PC-9 (cell line): ENCODE measurements at regions of chr13 and their contacts with region 1.

Region 1: GRCh38 chr13:73058736-73059459 is at the start of gene KLF5:
- DNase-seq: peak; percentile 92 to 99
- H3K4me3 ChIP-seq: peak within 1 kb of the TSS; percentile 89
- H3K27ac ChIP-seq: peak within 1 kb of the TSS; percentile 96
- H3K4me1 ChIP-seq: peaks cover 62% of the 10 kb centered on the region
- H3K27me3 ChIP-seq: no peaks in the 10 kb centered on the region
- CTCF ChIP-seq: no peak
- total RNA-seq, gene KLF5: 54.3 and 65.9 TPM in 2 replicates

Region 2: DNA sequence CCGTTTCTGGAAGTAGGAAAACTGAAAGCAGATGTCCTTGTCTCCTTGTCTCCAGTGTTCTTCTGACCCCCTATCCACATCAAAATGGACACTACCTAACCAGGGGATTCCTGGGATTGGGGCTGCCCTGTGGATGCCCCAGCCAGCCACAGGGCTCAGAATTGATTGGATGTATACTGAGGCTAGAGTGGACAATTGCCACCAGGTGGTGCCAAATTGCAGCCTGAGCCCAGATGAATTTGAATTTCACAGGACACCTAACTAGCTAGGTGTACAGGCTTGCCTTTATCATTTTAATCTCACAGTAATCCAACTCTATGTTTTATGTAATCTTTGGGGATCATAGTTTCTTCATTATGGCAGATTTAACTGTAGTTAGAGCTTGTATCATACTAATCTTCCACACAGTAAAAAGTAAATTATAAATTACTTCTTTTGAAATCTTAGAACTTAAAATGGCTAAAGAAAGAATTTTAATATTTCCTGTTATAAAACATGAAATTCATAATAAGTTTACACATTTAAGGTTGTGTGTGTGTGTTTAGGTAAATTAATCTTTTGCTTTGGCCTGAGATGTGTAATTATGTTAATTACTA is 219.0 kb before region 1 on chr13:
- CTCF ChIA-PET with region 1: no interaction called
- POLR2A ChIA-PET with region 1: no interaction called
- intact Hi-C with region 1: loop called (anchors 1 kb)
- DNase-seq: peak; percentile 39 to 54
- H3K4me3 ChIP-seq: no peak overlapping the region
- H3K27ac ChIP-seq: no peak overlapping the region
- H3K4me1 ChIP-seq: no peaks in the 10 kb centered on the region
- H3K27me3 ChIP-seq: no peaks in the 10 kb centered on the region
- CTCF ChIP-seq: peak; percentile 81

Region 3: GRCh38 chr13:73096181-73097117 is 37.6 kb after region 1 on chr13:
- CTCF ChIA-PET with region 1: interaction called, 7 read pairs
- POLR2A ChIA-PET with region 1: no interaction called
- intact Hi-C with region 1: loop called (anchors 1 kb)
- DNase-seq: peak; percentile 91 to 92
- H3K4me3 ChIP-seq: no peak overlapping the region
- H3K27ac ChIP-seq: peak overlapping the region; percentile 85
- H3K4me1 ChIP-seq: peaks cover 30% of the 10 kb centered on the region
- H3K27me3 ChIP-seq: no peaks in the 10 kb centered on the region
- CTCF ChIP-seq: no peak

Region 4: DNA sequence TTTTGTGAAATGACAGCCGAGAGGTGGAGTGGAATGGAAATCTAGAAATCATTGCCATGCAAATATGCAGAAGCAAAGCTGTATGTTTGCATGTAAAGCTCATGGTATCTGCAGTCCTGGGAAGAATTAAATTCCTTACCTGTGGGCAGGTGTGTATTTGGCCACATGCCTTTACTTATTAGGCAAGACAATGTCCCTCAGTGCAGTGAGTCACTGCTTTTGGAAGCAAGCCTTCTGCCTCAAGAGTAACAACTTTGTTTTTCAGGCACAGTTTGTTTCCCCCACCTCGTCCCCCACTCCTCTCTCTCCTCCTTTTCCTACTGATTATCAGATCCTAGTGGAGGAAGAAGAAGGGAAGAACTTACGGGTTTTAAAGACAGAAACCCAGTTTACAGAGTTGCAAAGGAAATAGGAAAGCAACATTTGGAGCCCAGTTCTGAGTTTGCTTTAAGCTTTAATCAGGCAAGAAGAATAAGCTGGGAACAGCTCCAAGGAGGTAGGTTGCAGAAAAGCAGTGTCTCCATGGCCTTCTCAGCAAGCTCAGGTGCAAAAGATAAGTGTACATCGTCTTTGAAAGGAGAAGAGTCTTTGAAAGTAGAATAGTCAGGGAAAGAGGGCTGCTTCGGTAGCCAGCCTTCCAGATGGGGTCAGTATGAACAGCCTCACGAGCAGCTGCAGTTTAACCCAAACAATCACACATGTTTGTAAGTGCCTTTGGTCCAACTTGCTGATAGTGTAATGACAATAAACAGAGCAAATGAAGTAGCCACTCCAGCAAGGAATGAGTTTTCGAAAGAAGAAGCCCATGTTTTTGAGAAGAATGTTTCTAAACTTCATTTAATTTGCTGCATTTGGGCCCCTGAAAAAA is 190.0 kb after region 1 on chr13:
- CTCF ChIA-PET with region 1: no interaction called
- POLR2A ChIA-PET with region 1: no interaction called
- intact Hi-C with region 1: loop called (anchors 5 kb)
- DNase-seq: peak; percentile 60 to 89
- H3K4me3 ChIP-seq: peak overlapping the region; percentile 3; the same call in 1 of the 2 replicates
- H3K27ac ChIP-seq: peak overlapping the region; percentile 71
- H3K4me1 ChIP-seq: peaks cover 22% of the 10 kb centered on the region
- H3K27me3 ChIP-seq: no peaks in the 10 kb centered on the region
- CTCF ChIP-seq: no peak

Region 5: GRCh38 chr13:73428137-73428536 is 369.2 kb after region 1 on chr13:
- CTCF ChIA-PET with region 1: no interaction called
- POLR2A ChIA-PET with region 1: interaction called, 9 read pairs
- intact Hi-C with region 1: loop called (anchors 5 kb)
- DNase-seq: peak; percentile 28 to 70
- H3K4me3 ChIP-seq: no peak overlapping the region
- H3K27ac ChIP-seq: peak overlapping the region; percentile 88
- H3K4me1 ChIP-seq: peaks cover 38% of the 10 kb centered on the region
- H3K27me3 ChIP-seq: no peaks in the 10 kb centered on the region
- CTCF ChIP-seq: no peak